MCF 10A (cell line): ENCODE measurements at regions of chr2 and their contacts with region 1.

Region 1: GRCh38 chr2:206159346-206160124 is at the starts of genes EEF1B2 and NDUFS1:
- DNase-seq: peak; percentile 98
- H3K4me3 Mint-ChIP-seq: peak within 1 kb of the TSS; percentile 80
- H3K27ac Mint-ChIP-seq: peak within 1 kb of the TSS; percentile 98
- H3K4me1 Mint-ChIP-seq: peaks cover 22% of the 10 kb centered on the region
- H3K27me3 Mint-ChIP-seq: no peaks in the 10 kb centered on the region
- CTCF ChIP-seq: no peak
- total RNA-seq, gene EEF1B2: 1,045 and 1,110 TPM in 2 replicates
- total RNA-seq, gene NDUFS1: 91.9 and 100 TPM in 2 replicates

Region 2: GRCh38 chr2:205975082-205975949 is 184.2 kb before region 1 on chr2:
- CTCF ChIA-PET with region 1: no interaction called
- POLR2A ChIA-PET with region 1: no interaction called
- intact Hi-C with region 1: no loop called
- DNase-seq: no peak
- H3K4me3 Mint-ChIP-seq: no peak overlapping the region
- H3K27ac Mint-ChIP-seq: no peak overlapping the region
- H3K4me1 Mint-ChIP-seq: no peaks in the 10 kb centered on the region
- H3K27me3 Mint-ChIP-seq: no peaks in the 10 kb centered on the region
- CTCF ChIP-seq: no peak

Region 3: DNA sequence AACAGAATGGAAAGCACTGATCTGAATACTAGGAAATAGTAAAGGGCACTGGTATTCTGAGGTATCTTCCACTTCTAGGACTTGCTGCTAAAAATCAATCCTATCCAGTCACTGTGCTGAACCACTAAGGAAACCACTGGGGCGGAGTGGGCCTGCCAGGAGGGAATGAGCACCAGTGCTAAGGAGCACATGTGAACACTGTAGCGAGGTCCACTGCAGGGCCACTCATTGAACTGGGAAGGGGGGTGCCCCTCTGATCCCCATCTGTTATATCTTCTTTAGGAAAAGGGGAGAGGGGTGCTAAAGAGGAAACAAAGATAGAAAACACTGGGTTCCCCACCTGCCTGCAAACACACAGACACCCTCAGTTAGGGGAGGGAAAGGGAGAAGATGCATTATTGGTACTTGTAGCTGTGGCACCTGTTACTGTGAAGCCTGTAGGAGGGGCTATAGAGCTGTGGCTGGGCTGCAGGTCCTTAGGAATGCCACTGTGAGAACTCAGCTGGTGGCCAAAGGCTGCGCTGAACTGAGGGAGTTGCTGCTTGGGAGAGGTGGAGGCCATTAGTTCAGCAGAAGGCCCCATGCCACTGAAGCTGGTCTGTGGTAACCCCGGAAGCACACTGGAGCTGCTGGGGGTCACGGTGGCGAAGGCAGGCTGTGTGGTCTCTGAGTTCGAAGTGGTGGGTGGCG is 155.4 kb before region 1 on chr2:
- CTCF ChIA-PET with region 1: no interaction called
- POLR2A ChIA-PET with region 1: no interaction called
- intact Hi-C with region 1: loop called (anchors 10 kb)
- DNase-seq: peak; percentile 42
- H3K4me3 Mint-ChIP-seq: no peak overlapping the region
- H3K27ac Mint-ChIP-seq: no peak overlapping the region
- H3K4me1 Mint-ChIP-seq: peaks cover 1% of the 10 kb centered on the region
- H3K27me3 Mint-ChIP-seq: no peaks in the 10 kb centered on the region
- CTCF ChIP-seq: peak; percentile 20

Region 4: GRCh38 chr2:206096876-206097275 is 62.7 kb before region 1 on chr2:
- CTCF ChIA-PET with region 1: no interaction called
- POLR2A ChIA-PET with region 1: no interaction called
- intact Hi-C with region 1: no loop called
- DNase-seq: no peak
- H3K4me3 Mint-ChIP-seq: no peak overlapping the region
- H3K27ac Mint-ChIP-seq: no peak overlapping the region
- H3K4me1 Mint-ChIP-seq: no peaks in the 10 kb centered on the region
- H3K27me3 Mint-ChIP-seq: no peaks in the 10 kb centered on the region
- CTCF ChIP-seq: no peak

Region 5: DNA sequence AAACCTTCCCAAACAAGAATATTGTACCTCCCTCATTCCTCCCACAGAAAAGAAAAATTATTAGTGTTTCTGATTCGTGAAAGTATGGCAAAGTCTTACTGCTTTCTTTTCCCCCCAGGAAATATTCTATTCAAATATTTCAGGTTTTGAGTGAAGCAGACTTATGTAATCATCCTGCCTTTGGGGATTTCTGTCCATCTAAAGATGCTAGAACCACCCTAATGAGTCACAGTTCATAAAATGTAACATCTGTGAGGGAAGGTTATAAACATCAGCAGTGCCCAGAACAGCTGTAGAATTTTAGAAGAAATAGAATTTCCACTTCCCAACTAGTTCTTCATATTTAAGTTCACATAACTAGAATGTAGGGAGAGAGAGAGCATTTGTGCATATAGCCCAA is 39.1 kb after region 1 on chr2:
- CTCF ChIA-PET with region 1: interaction called, 6 read pairs
- POLR2A ChIA-PET with region 1: interaction called, 12 read pairs
- intact Hi-C with region 1: no loop called
- DNase-seq: peak; percentile 40
- H3K4me3 Mint-ChIP-seq: no peak overlapping the region
- H3K27ac Mint-ChIP-seq: peak overlapping the region; percentile 18
- H3K4me1 Mint-ChIP-seq: peaks cover 27% of the 10 kb centered on the region
- H3K27me3 Mint-ChIP-seq: no peaks in the 10 kb centered on the region
- CTCF ChIP-seq: no peak

Region 6: GRCh38 chr2:206230060-206230762 is 70.7 kb after region 1 on chr2:
- CTCF ChIA-PET with region 1: interaction called, 11 read pairs
- POLR2A ChIA-PET with region 1: interaction called, 25 read pairs
- intact Hi-C with region 1: no loop called
- DNase-seq: peak; percentile 87
- H3K4me3 Mint-ChIP-seq: no peak overlapping the region
- H3K27ac Mint-ChIP-seq: peak overlapping the region; percentile 2
- H3K4me1 Mint-ChIP-seq: peaks cover 17% of the 10 kb centered on the region
- H3K27me3 Mint-ChIP-seq: no peaks in the 10 kb centered on the region
- CTCF ChIP-seq: no peak

Region 7: DNA sequence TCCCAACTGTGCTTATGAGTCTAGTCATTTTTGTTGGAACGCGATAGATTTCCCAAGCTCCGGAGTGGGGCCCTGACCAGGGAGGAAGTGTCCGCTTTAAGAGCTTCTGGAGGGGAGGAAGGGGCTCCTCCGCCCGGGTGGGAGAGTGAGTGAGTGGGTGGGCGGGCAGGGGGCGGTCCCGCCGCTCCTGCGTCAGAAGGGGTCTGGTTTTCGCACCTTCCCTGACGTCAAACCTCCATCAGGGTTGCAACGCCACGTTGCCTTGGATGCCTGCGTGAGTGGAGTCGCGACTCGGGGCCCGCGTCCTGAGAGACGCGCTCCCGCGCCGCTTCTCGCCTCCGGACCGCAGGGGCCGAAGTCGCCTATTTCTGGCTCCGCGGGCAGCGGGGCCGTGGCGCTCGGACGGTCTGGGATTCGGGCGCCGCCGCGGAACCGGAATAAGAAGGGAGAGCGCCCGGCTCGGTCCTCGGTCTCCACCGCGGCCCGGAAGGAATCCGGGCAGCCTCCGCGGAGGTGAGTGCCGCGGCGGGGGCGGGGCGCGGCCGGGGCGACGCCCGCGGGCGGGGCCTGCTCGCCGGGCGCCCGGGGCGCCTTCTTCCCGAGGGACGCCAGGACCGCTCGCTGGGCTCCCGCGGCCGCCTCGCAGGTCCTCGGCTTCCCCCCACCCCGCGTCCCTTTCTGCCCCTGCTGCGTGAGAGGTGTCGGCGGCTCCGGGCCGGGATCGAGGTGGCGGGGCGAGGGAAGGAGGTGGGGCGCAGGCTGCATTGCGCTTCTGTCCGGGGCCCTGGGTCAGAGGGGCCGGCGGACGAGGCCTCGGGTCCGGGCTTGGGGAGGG is 115.1 kb after region 1 on chr2 and contains the start of gene ZDBF2:
- CTCF ChIA-PET with region 1: interaction called, 3 read pairs
- POLR2A ChIA-PET with region 1: interaction called, 30 read pairs
- intact Hi-C with region 1: no loop called
- DNase-seq: peak; percentile 52
- H3K4me3 Mint-ChIP-seq: peak within 1 kb of the TSS; percentile 76
- H3K27ac Mint-ChIP-seq: peak within 1 kb of the TSS; percentile 89
- H3K4me1 Mint-ChIP-seq: no peaks in the 10 kb centered on the region
- H3K27me3 Mint-ChIP-seq: no peaks in the 10 kb centered on the region
- CTCF ChIP-seq: no peak
- total RNA-seq, gene ZDBF2: 15.6 and 21.3 TPM in 2 replicates

Region 8: GRCh38 chr2:206556357-206556949 is 396.9 kb after region 1 on chr2:
- CTCF ChIA-PET with region 1: interaction called, 12 read pairs
- POLR2A ChIA-PET with region 1: interaction called, 5 read pairs
- intact Hi-C with region 1: loop called (anchors 5 kb)
- DNase-seq: peak; percentile 57
- H3K4me3 Mint-ChIP-seq: no peak overlapping the region
- H3K27ac Mint-ChIP-seq: no peak overlapping the region
- H3K4me1 Mint-ChIP-seq: peaks cover 6% of the 10 kb centered on the region
- H3K27me3 Mint-ChIP-seq: peaks cover 12% of the 10 kb centered on the region
- CTCF ChIP-seq: peak; percentile 49